AG04450 (cell line): ENCODE measurements at regions of chr15 and their contacts with region 1.

Region 1: DNA sequence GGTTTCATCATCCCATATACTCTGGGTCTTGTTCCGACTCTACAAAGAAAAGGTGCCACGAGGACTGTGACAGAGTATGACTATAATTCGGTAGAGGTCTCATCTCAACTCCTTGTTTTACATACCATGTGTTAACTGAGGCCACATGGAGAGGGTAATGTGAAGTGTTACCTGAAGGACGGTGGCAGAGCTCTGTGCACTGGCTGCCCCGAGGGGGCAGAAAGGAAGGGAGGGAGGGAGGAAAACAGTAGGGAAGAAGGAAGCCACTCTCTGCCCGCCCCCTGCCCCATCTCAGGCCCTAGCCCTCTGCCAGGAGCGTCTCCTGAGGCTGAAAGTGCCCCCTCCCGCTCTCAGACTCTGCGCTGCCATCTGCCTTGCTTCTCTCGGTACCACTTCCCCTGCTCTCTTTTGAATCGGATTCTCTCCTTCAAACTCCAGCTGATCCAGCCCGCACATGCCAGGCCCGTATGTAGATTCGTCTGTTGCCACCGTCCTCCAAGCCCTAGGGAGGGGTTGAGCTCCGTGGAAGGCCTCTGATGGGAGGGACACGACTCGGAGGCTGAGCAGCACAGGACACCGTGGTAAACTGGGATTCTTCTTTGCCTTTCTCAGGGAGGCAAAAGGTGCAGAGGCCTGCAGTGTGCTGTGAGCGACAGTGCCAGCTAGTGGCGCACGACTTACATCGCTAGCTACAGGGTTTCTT is 70.5 kb upstream of the ATP10A start:
- DNase-seq: peak; percentile 57
- H3K4me3 ChIP-seq: peak overlapping the region; percentile 55
- H3K27ac ChIP-seq: no peak overlapping the region
- H3K27me3 ChIP-seq: no peaks in the 10 kb centered on the region
- CTCF ChIP-seq: peak; percentile 92

Region 2: DNA sequence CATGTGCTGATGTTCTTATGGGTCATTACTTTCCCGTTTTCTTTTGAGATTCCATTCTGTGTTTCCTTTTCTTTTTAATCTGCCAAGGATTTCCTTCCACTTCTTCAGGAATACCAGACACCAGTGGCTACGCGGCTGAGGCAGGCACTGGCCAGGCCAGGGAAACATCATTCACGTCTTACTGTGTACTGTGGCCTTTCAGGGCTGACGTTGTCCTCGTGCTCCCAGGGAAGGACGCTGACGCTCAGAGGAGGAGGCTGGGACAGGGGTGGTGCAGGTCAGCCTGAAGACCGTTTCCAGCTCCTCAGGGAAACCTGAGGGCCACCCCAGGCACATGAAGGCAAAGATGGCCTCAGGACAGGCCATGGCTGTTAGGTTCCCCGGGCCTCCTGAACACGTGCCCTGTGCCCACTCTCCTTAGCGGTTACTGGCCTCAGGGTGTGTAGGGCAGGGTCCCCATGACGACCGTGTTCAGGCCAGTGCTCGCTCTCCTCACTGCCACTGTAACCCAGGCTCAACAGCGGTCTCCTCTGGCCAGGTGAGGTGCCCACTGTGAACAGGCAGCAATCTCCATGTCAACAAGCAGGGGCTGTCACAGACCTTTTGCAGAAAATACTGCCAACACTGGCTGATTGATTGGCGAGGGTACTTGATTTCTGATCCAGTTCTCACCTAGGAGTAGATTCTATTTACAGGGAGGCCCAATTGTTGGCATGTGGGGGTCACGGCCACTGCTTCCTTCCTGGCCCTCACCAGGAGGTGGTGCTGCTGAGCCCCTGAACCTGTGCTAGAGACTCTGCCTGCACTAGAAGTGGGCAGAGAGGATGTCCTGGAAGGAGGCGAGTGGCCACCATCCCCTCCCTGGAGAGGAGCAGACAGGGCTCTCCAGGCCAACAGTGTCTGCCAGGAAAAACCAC is 240.0 kb before region 1 on chr15:
- CTCF ChIA-PET with region 1: interaction called, 28 read pairs
- POLR2A ChIA-PET with region 1: no interaction called
- DNase-seq: no peak
- H3K4me3 ChIP-seq: no peak overlapping the region
- H3K27ac ChIP-seq: no peak overlapping the region
- H3K27me3 ChIP-seq: no peaks in the 10 kb centered on the region
- CTCF ChIP-seq: peak; percentile 83

Region 3: DNA sequence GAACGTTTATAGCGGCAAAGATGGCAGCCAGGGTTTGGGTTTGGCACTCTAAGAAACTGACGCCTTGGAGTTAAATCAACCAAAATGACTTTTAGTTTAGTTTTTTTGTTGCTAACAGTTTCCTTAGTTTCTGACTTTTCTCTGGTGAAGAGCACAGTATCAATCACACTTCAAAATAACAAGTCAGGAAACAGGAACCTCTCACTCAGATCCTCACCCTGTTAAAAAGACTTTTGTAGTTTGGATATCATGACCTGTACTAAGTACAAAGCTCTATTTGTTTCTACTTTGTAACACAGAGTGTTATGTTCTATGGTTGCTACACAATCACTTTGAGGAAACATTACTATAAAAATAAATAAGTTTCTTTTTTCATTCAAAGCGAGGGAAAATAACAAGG is 121.5 kb before region 1 on chr15:
- CTCF ChIA-PET with region 1: interaction called, 14 read pairs
- POLR2A ChIA-PET with region 1: no interaction called
- DNase-seq: no peak
- H3K4me3 ChIP-seq: no peak overlapping the region
- H3K27ac ChIP-seq: no peak overlapping the region
- H3K27me3 ChIP-seq: no peaks in the 10 kb centered on the region
- CTCF ChIP-seq: no peak

Region 4: GRCh38 chr15:25830844-25831451 is 102.7 kb before region 1 on chr15:
- CTCF ChIA-PET with region 1: no interaction called
- POLR2A ChIA-PET with region 1: no interaction called
- DNase-seq: peak; percentile 87
- H3K4me3 ChIP-seq: peak overlapping the region; percentile 53
- H3K27ac ChIP-seq: peak overlapping the region; percentile 99
- H3K27me3 ChIP-seq: no peaks in the 10 kb centered on the region
- CTCF ChIP-seq: no peak

Region 5: DNA sequence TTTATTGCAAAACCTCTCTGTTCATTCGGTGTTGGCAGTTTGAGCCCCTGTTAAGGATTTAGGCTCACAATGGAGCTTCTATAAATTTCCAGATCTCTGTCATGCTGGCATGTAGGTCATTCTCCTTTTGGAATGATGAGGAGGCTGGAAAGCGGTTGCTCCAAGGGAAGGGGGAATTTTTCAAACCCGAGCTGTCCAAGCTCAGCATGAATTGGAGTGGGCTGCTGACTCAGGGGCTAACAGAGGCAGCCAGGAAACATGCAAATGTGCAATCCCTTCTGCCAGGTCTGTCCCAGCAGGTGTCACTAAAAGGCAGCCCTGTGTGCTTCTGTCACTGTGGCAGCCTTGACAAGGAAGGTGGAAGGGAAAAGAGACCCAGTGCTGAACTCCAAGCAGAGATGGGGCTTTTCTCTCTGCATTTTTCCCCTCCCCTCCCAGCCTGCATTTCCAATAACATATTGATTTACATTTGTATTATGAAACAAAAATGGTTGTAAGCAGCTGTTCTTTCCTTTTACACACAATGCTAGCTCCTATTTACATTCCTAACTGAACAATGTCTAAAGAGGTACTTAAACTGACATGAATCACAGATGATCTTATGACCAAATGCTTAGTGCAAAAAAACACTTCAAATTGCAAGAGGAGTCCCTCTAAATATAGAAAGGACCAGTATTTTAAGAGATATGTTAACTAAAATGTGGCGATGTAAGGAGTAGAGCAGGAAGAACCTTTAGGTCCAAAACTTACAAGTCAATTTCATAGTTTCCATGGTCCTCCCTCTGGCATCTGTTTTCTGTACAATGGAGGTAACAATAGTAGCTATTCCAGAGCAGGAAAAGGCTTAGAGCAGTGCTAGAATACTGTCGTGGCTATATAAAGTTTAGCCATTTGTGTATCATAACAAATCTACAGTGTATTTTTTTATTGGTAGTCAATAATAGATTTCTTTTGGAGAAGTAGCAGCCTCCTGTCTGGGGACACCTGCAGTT is 14.0 kb after region 1 on chr15:
- CTCF ChIA-PET with region 1: interaction called, 22 read pairs
- POLR2A ChIA-PET with region 1: no interaction called
- DNase-seq: no peak
- H3K4me3 ChIP-seq: no peak overlapping the region
- H3K27ac ChIP-seq: no peak overlapping the region
- H3K27me3 ChIP-seq: peaks cover 2% of the 10 kb centered on the region
- CTCF ChIP-seq: no peak